ENCODE measurements at regions of chr10 and their contacts with region 1.

Region 1: GRCh38 chr10:51743146-51743545 is 43.8 kb upstream of the CSTF2T start:
- DNase-seq: no peak
- ATAC-seq: peak; percentile 71
- H3K4me3 Mint-ChIP-seq: no peak overlapping the region
- H3K27ac Mint-ChIP-seq: no peak overlapping the region
- H3K4me1 Mint-ChIP-seq: peaks cover 11% of the 10 kb centered on the region
- H3K27me3 Mint-ChIP-seq: no peaks in the 10 kb centered on the region
- CTCF ChIP-seq: no peak

Region 2: DNA sequence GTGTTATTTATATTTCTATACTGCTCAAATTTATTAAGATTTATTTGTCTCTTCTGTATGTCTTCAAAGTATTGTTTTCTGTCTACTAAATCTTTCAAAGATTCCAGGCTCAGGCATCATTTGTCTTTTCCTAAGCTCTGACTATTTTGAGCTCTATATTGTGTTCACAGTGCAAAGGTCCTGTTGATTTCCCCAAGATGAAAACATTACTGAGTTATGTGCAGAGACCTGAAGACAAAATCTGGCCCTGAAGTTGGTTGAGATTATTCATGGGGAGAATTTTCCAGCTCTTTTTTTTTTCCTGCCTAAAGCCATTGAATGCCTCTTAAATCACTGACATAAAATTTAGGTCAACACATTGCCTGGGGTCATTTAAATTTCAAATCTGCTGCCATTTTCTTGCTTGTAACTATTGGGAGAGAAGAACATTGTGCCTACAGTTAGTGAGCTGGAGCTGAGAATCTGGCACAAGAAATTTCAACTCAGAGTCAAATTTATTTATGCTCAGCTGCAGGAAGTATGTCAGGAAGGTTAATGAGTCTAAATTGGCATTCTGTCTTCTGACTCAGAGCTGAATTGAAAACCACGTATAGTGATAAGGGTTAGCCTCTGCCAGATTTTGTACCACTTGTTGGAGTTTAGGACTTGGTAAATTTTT is 75.3 kb before region 1 on chr10:
- CTCF ChIA-PET with region 1: no interaction called
- POLR2A ChIA-PET with region 1: no interaction called
- intact Hi-C with region 1: loop called (anchors 2 kb)
- DNase-seq: no peak
- ATAC-seq: no peak
- H3K4me3 Mint-ChIP-seq: no peak overlapping the region
- H3K27ac Mint-ChIP-seq: no peak overlapping the region
- H3K4me1 Mint-ChIP-seq: no peaks in the 10 kb centered on the region
- H3K27me3 Mint-ChIP-seq: no peaks in the 10 kb centered on the region
- CTCF ChIP-seq: no peak

Region 3: DNA sequence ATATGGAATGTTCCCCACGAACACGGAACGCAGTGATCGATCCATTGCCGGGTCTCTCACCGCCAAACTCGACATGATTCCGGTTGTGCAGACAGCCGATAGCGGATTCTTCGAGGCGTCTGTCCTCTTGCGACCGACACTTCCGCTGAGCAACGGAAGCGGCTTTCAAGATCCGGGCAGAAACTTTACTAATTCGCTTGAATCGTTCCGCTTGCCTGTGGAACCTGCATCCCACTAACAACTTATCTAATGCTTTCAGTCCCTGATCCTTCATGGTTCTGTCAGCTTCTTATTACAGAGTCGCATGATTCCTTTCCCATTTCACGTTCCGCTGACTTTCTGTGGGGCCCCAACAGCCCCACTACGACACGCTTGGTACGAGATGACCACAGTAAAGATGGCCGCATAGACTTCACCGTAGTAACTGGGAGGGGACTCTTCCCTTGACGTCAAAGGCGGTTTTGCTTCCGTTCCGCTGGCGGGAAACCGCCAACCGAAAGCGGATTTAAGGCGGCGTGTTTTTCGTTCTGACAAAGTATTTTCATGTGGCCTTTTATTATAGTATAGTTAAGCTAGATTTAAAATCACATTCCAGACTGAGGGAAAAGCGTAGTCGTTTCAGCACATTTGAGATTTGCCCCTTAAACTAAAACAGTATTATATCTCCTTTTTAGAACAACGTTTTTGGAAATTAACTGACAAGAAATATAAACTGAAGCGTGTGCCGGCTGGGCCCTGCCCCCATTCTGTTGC is 43.5 kb before region 1 on chr10 and contains the start of gene CSTF2T:
- CTCF ChIA-PET with region 1: no interaction called
- POLR2A ChIA-PET with region 1: no interaction called
- intact Hi-C with region 1: loop called (anchors 2 kb)
- DNase-seq: peak; percentile 81
- ATAC-seq: peak; percentile 90
- H3K4me3 Mint-ChIP-seq: peak within 1 kb of the TSS; percentile 99
- H3K27ac Mint-ChIP-seq: peak within 1 kb of the TSS; percentile 100
- H3K4me1 Mint-ChIP-seq: peaks cover 52% of the 10 kb centered on the region
- H3K27me3 Mint-ChIP-seq: no peaks in the 10 kb centered on the region
- CTCF ChIP-seq: no peak
- total RNA-seq, gene CSTF2T: 39.3 and 40.8 TPM in 2 replicates